T-cell (primary cell): ENCODE measurements at regions of chr22 and their contacts with region 1.

Region 1: GRCh38 chr22:46250035-46250782 is at the start of gene CDPF1:
- DNase-seq: peak; percentile 76 to 95 (median 86)
- ATAC-seq: peak; percentile 94 to 96 (median 96)
- H3K4me3 ChIP-seq: peak within 1 kb of the TSS; percentile 76 to 80
- H3K4me3 Mint-ChIP-seq: peak within 1 kb of the TSS; percentile 81 to 84 (median 83)
- H3K27ac ChIP-seq: peak within 1 kb of the TSS; percentile 52
- H3K27ac Mint-ChIP-seq: peak within 1 kb of the TSS; percentile 86 to 87
- H3K4me1 ChIP-seq: peaks cover 2 to 26% of the 10 kb centered on the region in 2 experiments
- H3K4me1 Mint-ChIP-seq: peaks cover 25 to 36% (median 29%) of the 10 kb centered on the region in 3 donors
- H3K27me3 ChIP-seq: no peaks in the 10 kb centered on the region
- H3K27me3 Mint-ChIP-seq: no peaks in the 10 kb centered on the region
- total RNA-seq, gene CDPF1: 5.8 to 15.3 (median 11.5) TPM

Region 2: DNA sequence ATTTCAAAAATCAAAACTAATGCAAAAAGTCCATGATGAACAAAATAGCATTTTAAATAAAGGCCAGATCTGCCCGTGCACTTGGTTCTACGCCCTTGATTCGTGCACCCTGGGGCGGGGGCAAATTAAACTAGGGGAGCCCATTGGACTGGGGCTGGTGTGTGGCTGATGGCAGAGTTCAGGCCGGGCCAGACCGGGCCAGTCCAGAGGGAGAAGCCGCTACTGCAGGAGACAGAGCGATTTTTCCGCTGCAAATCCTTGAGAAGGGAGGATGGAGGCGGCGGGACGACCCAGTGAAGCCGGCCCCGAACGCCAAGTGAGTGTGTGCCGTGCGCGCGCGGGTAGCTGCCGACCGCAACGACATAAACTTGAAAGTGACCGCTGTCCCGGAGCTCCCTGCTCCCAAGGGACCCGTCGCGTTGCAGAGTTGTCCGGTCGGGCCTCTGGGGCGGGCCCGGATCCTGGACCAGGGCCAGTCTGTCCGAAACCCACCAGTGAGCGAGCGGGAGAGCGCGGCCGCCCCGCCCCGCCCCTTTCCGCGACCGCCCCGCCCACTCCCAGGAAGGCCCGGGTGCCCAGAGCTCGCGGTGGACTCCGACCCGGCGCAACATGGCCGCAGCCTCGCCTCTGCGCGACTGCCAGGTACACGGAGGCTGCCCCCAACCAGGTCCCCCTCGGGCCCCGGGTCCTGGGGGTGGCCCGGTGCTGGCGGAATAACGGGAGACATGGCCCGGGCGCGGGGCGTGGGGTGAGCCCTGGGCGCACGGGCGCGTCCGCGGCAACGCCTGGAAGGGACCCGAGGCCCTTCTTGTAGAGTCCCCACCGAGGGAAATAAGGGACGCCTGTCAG is 17.4 kb after region 1 on chr22 and contains the start of gene TTC38:
- CTCF ChIA-PET with region 1: interaction called in 1 of 2 experiments, 3 read pairs
- POLR2A ChIA-PET with region 1: interaction called in 1 of 2 experiments, 11 read pairs
- DNase-seq: peak in 25 of 35 experiments; percentile 15 to 65 (median 39)
- ATAC-seq: peak; percentile 82 to 90 (median 86)
- H3K4me3 ChIP-seq: peak within 1 kb of the TSS; percentile 71 to 84
- H3K4me3 Mint-ChIP-seq: peak within 1 kb of the TSS; percentile 89 to 95 (median 90)
- H3K27ac ChIP-seq: no peak within 1 kb of the TSS
- H3K27ac Mint-ChIP-seq: peak within 1 kb of the TSS; percentile 64 to 65
- H3K4me1 ChIP-seq: peaks cover 0 to 31% of the 10 kb centered on the region in 2 experiments
- H3K4me1 Mint-ChIP-seq: peaks cover 15 to 25% (median 20%) of the 10 kb centered on the region in 3 donors
- H3K27me3 ChIP-seq: peaks cover 2 to 25% of the 10 kb centered on the region in 2 experiments
- H3K27me3 Mint-ChIP-seq: peaks cover 20 to 21% of the 10 kb centered on the region in 2 donors
- total RNA-seq, gene TTC38: 6.8 to 21.6 (median 9.5) TPM

Region 3: DNA sequence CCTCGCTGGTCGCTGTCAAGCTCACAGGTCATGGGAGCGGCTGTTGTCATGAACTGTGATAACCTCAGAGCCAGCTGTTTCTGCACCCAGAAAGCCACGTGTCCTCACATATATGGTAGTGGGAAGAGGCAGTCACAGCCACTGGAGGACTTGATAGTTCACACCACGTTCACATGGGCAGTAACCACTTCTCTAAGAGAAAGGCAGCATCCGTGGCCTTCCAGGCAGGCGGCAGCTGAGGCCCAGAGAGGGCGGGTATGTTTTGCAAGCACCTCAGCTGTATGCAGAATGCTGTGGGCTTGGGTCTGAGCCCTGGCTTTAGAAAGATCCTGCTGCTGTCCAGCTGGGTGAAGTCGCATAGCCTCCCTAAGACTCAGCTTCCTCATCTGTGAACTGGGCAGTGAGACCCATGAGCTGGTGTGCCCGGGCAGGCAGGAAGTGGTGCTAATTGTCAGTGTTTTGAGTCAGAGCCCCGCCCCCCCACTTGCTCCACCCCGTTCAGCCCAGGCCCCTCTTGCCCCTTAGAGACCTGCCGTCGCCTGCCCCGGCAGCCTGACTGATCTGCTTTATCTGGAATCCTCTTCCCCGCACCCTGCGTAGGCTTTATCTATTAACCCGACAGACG is 30.9 kb after region 1 on chr22:
- CTCF ChIA-PET with region 1: no interaction called
- POLR2A ChIA-PET with region 1: no interaction called
- DNase-seq: peak in 28 of 35 experiments; percentile 7 to 75 (median 39)
- ATAC-seq: peak in 3 of 4 experiments; percentile 43 to 87 (median 82)
- H3K4me3 ChIP-seq: peak overlapping the region in 1 of 2 donors; percentile 30
- H3K4me3 Mint-ChIP-seq: peak overlapping the region in 1 of 3 donors; percentile 25
- H3K27ac ChIP-seq: peak overlapping the region; percentile 81
- H3K27ac Mint-ChIP-seq: peak overlapping the region in 1 of 2 donors; percentile 27
- H3K4me1 ChIP-seq: peaks cover 0 to 70% of the 10 kb centered on the region in 2 experiments
- H3K4me1 Mint-ChIP-seq: peaks cover 0 to 18% (median 5%) of the 10 kb centered on the region in 3 donors
- H3K27me3 ChIP-seq: no peaks in the 10 kb centered on the region
- H3K27me3 Mint-ChIP-seq: no peaks in the 10 kb centered on the region